Dorsolateral prefrontal cortex (tissue), 120 donors: ENCODE measurements at regions of chr5 and their contacts with region 1.

Region 1: DNA sequence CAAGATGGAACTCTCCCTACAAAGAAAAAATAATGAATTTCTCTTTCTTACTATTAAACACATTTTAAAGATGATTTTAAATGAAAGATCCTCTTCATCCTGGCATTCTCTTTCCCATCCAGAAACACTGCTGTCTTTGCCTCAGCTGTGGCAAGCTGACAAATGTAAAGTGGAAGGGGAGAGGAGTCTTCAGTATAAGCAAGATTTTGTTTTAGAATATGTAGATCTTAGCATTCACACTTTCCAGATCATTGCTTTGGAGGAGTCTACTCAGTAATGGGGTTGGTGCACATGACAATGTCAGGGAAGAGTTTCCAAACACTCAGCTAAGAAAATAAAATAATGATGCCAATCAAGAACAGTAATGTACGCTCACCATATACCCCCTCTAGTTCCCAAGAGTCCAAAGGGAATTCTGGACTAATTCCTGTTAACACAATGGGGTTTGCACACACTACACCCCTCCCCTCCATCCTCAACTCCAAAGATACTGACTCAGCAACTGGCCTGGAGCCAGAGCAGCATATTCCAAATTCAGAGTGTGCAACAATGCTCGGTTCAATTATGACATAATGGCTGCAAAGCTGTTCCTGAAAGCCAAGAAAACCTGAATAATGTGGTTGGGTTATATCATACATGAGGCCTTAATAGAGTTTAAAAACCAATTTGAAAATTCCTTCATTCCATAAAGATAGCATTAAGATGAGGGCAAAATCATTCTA is 4.6 kb downstream of the C5orf63 start:
- DNase-seq: peak in 1 of 10 donors; percentile 5
- H3K4me3 ChIP-seq: no peak overlapping the region
- H3K27ac ChIP-seq: no peak overlapping the region
- H3K27me3 ChIP-seq: peaks cover 0 to 13% (median 0%) of the 10 kb centered on the region in 45 donors
- CTCF ChIP-seq: no peak

Region 2: GRCh38 chr5:126794157-126794828 is 274.4 kb before region 1 on chr5:
- intact Hi-C with region 1: no loop called
- DNase-seq: no peak
- H3K4me3 ChIP-seq: no peak overlapping the region
- H3K27ac ChIP-seq: no peak overlapping the region
- H3K27me3 ChIP-seq: no peaks in the 10 kb centered on the region
- CTCF ChIP-seq: no peak

Region 3: DNA sequence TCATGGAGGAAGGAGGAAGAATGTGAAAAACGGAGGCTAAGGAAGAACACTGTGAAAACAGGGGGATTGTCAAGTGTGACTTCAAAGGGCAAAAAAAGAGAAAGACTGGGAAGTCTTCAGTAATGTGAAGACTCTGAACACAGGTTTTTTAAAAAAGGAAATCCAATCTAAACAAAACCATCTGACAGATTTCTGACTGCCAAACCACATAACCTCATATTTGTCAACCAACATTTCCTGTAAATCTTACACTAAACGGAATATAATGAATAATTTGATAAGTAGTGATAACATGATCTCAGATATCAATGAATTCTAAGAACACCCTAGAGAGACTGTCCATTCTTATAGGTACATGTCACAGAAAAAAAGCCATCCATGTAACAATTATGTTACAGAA is 1344.7 kb after region 1 on chr5:
- intact Hi-C with region 1: loop called in 1 of 2 experiments (anchors 10 kb)
- DNase-seq: no peak
- H3K4me3 ChIP-seq: no peak overlapping the region
- H3K27ac ChIP-seq: no peak overlapping the region
- H3K27me3 ChIP-seq: no peaks in the 10 kb centered on the region
- CTCF ChIP-seq: no peak